ENCODE measurements at regions of chr14 and their contacts with region 1.

Region 1: DNA sequence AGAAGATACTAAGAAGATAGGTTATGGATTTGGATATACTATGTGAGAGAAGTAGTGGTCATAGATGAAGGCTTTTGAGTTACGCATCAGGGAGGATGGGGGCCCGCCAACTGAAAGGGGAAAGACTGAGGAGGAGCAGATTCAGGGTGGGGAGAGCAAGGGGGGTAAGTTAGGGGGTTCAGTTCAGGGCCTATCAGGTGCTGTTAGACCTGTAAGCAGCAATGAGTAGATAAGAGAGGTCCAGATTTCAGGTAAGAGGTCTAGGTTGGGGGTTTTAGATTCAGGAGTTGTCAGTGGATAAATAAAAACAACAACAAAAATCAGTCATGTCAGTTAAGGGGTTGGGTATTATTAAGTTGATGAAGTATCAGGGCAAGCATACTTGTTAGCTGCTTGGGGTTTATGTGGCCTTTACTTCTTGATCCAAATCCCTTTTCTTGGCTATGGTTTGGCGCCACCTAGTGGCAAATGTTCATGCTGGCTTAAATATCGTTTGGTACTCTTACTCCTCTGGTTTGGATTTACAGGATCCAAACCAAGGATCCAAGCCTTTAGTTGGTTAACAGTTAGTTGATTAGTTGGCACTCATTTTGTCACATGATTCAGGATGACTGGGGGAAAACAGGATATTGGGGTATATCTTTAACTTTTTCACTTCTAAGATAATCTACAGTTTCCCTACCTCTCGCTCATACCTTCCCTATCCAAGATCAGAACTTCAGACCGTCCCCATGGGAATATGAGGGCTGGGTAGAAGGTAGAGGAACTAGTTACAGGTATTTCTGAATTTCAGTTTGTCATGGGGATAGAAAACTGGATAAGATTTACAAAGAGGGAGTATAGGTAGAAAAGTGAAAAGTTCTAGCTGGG is 65.1 kb downstream of the PCNX1 start:
- DNase-seq: peak; percentile 68 to 92 (median 82)
- ATAC-seq: peak; percentile 80
- H3K4me3 ChIP-seq: no peak overlapping the region
- H3K4me3 Mint-ChIP-seq: no peak overlapping the region
- H3K27ac ChIP-seq: peak overlapping the region in 1 of 2 donors; percentile 18
- H3K27ac Mint-ChIP-seq: peak overlapping the region; percentile 20
- H3K4me1 ChIP-seq: peaks cover 23% of the 10 kb centered on the region
- H3K4me1 Mint-ChIP-seq: peaks cover 56% of the 10 kb centered on the region
- H3K27me3 ChIP-seq: no peaks in the 10 kb centered on the region
- H3K27me3 Mint-ChIP-seq: no peaks in the 10 kb centered on the region
- CTCF ChIP-seq: peak; percentile 87

Region 2: DNA sequence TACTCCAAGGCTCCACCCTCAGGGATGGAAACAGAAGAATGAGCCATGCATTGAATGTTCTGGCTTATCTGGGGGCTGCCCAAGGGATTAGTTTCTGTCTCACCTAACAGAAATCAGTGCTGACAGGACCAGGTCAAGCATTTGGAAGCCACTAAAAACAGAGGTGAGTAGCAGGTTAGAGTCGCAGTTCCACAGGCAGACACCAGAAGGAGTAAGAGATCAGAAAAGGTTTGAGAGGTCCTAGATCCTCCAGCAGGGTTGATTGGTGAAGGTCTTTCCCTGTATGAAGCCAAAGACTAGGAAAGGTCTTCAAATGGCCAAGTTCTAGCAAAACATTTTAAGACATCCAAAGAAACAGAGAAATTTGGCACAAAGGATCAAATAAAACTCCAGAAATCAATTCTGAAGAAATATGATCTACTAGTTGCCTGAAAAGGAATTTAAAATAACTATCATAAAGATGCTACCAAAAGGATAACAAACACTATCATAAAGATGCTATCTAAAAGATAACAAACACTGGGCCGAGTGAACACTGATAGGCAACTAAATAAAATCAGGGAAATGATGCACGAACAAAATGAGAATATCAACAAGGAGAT is 350.1 kb before region 1 on chr14:
- CTCF ChIA-PET with region 1: no interaction called
- POLR2A ChIA-PET with region 1: no interaction called
- intact Hi-C with region 1: loop called in 1 of 2 experiments (anchors 1 kb)
- DNase-seq: peak; percentile 16 to 79 (median 49)
- ATAC-seq: peak; percentile 86
- H3K4me3 ChIP-seq: no peak overlapping the region
- H3K4me3 Mint-ChIP-seq: no peak overlapping the region
- H3K27ac ChIP-seq: no peak overlapping the region
- H3K27ac Mint-ChIP-seq: no peak overlapping the region
- H3K4me1 ChIP-seq: no peaks in the 10 kb centered on the region
- H3K4me1 Mint-ChIP-seq: peaks cover 5% of the 10 kb centered on the region
- H3K27me3 ChIP-seq: no peaks in the 10 kb centered on the region
- H3K27me3 Mint-ChIP-seq: no peaks in the 10 kb centered on the region
- CTCF ChIP-seq: peak; percentile 89

Region 3: GRCh38 chr14:70809543-70810244 is 162.6 kb before region 1 on chr14:
- CTCF ChIA-PET with region 1: interaction called, 10 read pairs
- POLR2A ChIA-PET with region 1: no interaction called
- intact Hi-C with region 1: no loop called
- DNase-seq: peak; percentile 69 to 94 (median 84)
- ATAC-seq: peak; percentile 74
- H3K4me3 ChIP-seq: peak overlapping the region; percentile 74
- H3K4me3 Mint-ChIP-seq: no peak overlapping the region
- H3K27ac ChIP-seq: peak overlapping the region in 1 of 2 donors; percentile 31
- H3K27ac Mint-ChIP-seq: no peak overlapping the region
- H3K4me1 ChIP-seq: peaks cover 15% of the 10 kb centered on the region
- H3K4me1 Mint-ChIP-seq: peaks cover 10% of the 10 kb centered on the region
- H3K27me3 ChIP-seq: no peaks in the 10 kb centered on the region
- H3K27me3 Mint-ChIP-seq: no peaks in the 10 kb centered on the region
- CTCF ChIP-seq: no peak

Region 4: DNA sequence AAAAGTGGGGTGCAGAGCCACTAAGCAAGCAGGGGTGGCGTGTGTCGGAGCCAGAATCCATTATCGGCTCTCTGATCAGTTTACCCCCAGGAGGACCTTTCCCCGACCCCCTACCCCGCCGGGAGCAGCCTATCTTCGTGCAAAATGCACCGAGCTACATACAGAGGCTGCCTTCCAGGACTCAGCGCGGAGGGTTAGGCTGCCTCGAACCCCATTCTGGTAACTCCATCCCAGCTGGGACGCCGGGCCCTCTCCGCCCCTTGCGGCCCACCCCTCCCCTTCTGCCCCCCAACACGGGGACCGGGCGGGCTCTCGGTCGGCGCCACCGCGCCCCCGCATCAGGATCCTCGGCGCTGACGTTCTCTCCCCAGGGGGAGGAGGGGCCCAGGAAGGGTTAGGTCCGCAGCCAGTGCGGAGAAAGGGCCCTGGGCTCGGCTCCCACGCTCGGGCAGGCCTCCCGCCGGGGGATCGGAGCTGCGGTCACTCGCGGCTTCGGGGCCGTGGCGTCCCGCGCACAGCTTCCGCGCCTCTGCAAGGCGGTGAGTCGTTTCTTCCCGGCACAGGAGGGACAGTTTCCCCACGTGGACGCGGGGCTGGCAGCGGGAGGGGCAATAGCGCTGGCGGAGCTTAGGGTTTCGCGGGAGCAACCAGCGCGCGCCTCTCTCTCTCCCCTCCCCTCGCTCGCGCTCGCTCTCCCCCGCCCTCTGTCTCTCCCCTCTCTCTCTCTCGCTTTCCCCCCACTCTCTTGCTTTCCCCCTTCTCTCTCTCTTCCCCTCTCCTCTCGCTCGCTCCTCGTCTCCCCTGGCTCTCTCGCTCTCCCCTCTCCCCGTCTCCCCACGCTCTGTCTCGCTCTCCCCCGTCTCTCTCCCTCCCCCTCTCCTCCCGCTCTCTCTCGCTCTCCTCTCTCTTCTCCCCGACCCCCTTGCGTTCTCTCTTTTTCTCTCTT is 150.5 kb before region 1 on chr14:
- CTCF ChIA-PET with region 1: interaction called, 21 read pairs
- POLR2A ChIA-PET with region 1: interaction called, 3 read pairs
- intact Hi-C with region 1: loop called (anchors 1 kb)
- DNase-seq: peak in 13 of 14 experiments; percentile 23 to 81 (median 44)
- ATAC-seq: peak; percentile 46
- H3K4me3 ChIP-seq: peak overlapping the region; percentile 66
- H3K4me3 Mint-ChIP-seq: peak overlapping the region; percentile 83
- H3K27ac ChIP-seq: no peak overlapping the region
- H3K27ac Mint-ChIP-seq: no peak overlapping the region
- H3K4me1 ChIP-seq: peaks cover 18% of the 10 kb centered on the region
- H3K4me1 Mint-ChIP-seq: peaks cover 28% of the 10 kb centered on the region
- H3K27me3 ChIP-seq: peaks cover 5 to 15% of the 10 kb centered on the region in 2 experiments
- H3K27me3 Mint-ChIP-seq: peaks cover 43% of the 10 kb centered on the region
- CTCF ChIP-seq: no peak

Region 5: DNA sequence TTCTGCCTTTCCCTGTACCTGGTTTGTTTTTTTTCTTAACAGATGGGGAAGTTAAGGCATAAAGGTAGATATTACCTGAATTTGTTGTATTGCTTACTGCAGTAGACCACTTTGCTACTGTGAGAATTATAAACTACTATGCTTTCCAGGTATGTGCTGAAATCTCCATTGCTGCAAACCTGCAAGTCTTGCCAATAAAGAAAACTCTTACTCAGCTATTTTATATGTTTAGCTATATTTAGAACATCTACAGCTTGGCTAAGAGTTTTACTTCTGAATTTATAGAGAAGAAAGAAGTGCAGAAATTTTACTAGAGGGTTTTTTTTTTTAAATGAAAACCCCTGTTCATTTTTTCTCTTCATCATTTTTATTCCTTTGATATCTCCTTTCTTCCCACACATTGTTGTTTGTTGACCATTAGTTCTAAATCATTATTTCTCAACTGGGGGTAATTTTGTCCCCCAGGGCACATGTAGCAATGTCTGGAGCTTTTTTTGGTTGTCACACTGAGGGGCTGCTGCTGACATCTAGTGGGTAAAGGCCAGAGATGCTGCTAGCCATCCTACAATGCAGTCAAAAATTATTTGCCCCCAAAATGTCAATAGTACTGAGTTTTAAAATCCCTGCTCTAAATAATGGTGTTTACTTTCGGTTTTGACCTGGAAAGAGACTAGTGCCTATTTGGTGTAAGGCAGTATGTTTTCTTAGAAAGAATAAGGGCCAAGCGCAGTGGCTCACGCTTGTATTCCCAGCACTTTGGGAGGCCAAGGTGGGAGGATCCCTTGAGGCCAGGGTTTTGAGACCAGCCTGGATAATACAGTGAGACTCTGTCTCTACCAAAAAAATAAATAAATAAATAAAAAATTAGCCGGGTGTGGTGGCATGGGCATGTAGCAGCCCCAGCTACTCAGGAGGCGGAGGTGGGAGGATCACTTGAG is 16.5 kb before region 1 on chr14:
- CTCF ChIA-PET with region 1: interaction called, 12 read pairs
- POLR2A ChIA-PET with region 1: no interaction called
- intact Hi-C with region 1: no loop called
- DNase-seq: peak; percentile 24 to 79 (median 42)
- ATAC-seq: peak; percentile 84
- H3K4me3 ChIP-seq: no peak overlapping the region
- H3K4me3 Mint-ChIP-seq: no peak overlapping the region
- H3K27ac ChIP-seq: no peak overlapping the region
- H3K27ac Mint-ChIP-seq: peak overlapping the region; percentile 55
- H3K4me1 ChIP-seq: peaks cover 19% of the 10 kb centered on the region
- H3K4me1 Mint-ChIP-seq: peaks cover 44% of the 10 kb centered on the region
- H3K27me3 ChIP-seq: no peaks in the 10 kb centered on the region
- H3K27me3 Mint-ChIP-seq: no peaks in the 10 kb centered on the region
- CTCF ChIP-seq: peak; percentile 89

Region 6: GRCh38 chr14:71286135-71286534 is 313.8 kb after region 1 on chr14:
- CTCF ChIA-PET with region 1: no interaction called
- POLR2A ChIA-PET with region 1: no interaction called
- intact Hi-C with region 1: no loop called
- DNase-seq: no peak
- ATAC-seq: no peak
- H3K4me3 ChIP-seq: no peak overlapping the region
- H3K4me3 Mint-ChIP-seq: no peak overlapping the region
- H3K27ac ChIP-seq: no peak overlapping the region
- H3K27ac Mint-ChIP-seq: no peak overlapping the region
- H3K4me1 ChIP-seq: peaks cover 3% of the 10 kb centered on the region
- H3K4me1 Mint-ChIP-seq: no peaks in the 10 kb centered on the region
- H3K27me3 ChIP-seq: no peaks in the 10 kb centered on the region
- H3K27me3 Mint-ChIP-seq: no peaks in the 10 kb centered on the region
- CTCF ChIP-seq: no peak

Region 7: GRCh38 chr14:71430321-71431208 is 458.2 kb after region 1 on chr14:
- CTCF ChIA-PET with region 1: no interaction called
- POLR2A ChIA-PET with region 1: no interaction called
- intact Hi-C with region 1: no loop called
- DNase-seq: no peak
- ATAC-seq: no peak
- H3K4me3 ChIP-seq: no peak overlapping the region
- H3K4me3 Mint-ChIP-seq: no peak overlapping the region
- H3K27ac ChIP-seq: no peak overlapping the region
- H3K27ac Mint-ChIP-seq: no peak overlapping the region
- H3K4me1 ChIP-seq: no peaks in the 10 kb centered on the region
- H3K4me1 Mint-ChIP-seq: peaks cover 29% of the 10 kb centered on the region
- H3K27me3 ChIP-seq: no peaks in the 10 kb centered on the region
- H3K27me3 Mint-ChIP-seq: no peaks in the 10 kb centered on the region
- CTCF ChIP-seq: no peak

Measured in CD4-positive, alpha-beta T cell (primary cell).